Aorta (tissue), 5 donors: ENCODE measurements at regions of chr19 and their contacts with region 1.

Region 1: GRCh38 chr19:15449620-15450527 is at the start of gene WIZ:
- DNase-seq: peak; percentile 92 to 95
- ATAC-seq: peak; percentile 36
- H3K4me3 ChIP-seq: peak within 1 kb of the TSS; percentile 51 to 66
- H3K27ac ChIP-seq: peak within 1 kb of the TSS in 1 of 2 donors; percentile 78
- H3K4me1 ChIP-seq: peaks cover 0 to 1% of the 10 kb centered on the region in 2 donors
- H3K27me3 ChIP-seq: no peaks in the 10 kb centered on the region
- total RNA-seq, gene WIZ: 38.0 to 41.4 TPM

Region 2: GRCh38 chr19:15213715-15214381 is 236.0 kb before region 1 on chr19:
- intact Hi-C with region 1: no loop called
- DNase-seq: peak; percentile 92 to 98
- ATAC-seq: peak; percentile 82
- H3K4me3 ChIP-seq: no peak overlapping the region
- H3K27ac ChIP-seq: peak overlapping the region in 1 of 2 donors; percentile 76
- H3K4me1 ChIP-seq: peaks cover 0 to 4% of the 10 kb centered on the region in 2 donors
- H3K27me3 ChIP-seq: no peaks in the 10 kb centered on the region

Region 3: DNA sequence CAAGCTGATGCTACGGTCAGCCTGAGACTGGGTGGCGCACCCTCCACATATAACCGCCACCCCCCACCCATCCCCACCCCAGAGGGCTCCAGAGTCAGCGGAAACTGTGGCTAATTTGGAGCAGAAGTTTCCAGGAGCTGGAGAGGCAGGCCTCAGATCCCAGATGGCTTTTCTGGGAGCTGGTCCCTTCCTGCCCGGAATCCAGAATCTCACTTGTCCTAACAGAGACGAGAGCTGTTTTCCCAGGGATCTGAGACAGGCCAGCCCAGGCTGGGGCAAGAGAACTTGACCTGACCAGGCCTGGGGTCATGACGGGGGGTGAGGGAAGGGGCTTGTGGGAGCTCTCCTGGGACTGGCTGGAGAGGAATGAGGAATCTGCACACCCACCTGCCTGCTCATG is 224.1 kb before region 1 on chr19:
- intact Hi-C with region 1: no loop called
- DNase-seq: no peak
- ATAC-seq: no peak
- H3K4me3 ChIP-seq: no peak overlapping the region
- H3K27ac ChIP-seq: no peak overlapping the region
- H3K4me1 ChIP-seq: no peaks in the 10 kb centered on the region
- H3K27me3 ChIP-seq: no peaks in the 10 kb centered on the region

Region 4: DNA sequence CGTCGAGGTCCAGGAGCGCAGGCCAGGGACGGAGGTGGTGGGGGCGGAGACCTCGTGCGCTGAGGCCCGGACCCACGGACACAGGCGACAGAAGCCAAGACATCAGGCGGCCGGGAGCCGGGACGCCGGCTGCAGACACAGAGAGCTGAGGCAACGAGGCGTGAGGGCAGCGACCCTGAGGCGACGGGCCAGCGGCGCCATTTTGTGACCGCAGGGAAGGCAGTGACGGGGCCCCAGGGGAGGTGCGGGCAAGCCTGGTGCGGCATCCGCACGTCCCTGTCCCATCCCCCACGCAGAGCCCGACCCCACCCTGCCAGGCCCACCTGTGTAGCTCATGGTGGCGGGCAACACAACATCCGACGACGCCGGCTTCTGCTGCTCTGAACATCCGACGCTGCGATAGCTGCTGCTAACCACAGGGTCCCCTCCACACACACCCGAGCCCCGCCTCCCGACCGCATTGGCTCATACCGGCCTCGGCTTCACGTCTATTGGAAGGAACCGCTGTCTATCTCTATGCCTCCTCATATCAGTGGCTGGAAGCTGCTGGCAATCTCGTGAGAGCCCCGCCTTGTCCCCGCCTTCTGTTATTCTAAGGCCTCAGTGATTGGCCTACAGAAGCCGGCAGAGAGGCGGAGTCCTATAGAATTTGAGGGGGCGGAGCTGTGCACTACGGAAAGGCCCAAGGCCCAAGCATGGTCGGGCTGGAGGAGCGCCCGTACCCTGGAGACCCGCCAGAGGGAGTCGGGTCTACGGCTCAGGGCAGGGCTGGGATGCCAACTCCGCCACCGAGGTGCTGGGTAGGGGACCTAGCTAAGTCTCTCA is 31.1 kb before region 1 on chr19 and contains the start of gene AKAP8L:
- intact Hi-C with region 1: loop called in 1 of 2 experiments (anchors 2 kb)
- DNase-seq: peak; percentile 99
- ATAC-seq: peak; percentile 97
- H3K4me3 ChIP-seq: peak within 1 kb of the TSS; percentile 77 to 86
- H3K27ac ChIP-seq: peak within 1 kb of the TSS; percentile 62 to 93
- H3K4me1 ChIP-seq: no peaks in the 10 kb centered on the region
- H3K27me3 ChIP-seq: no peaks in the 10 kb centered on the region
- total RNA-seq, gene AKAP8L: 70.8 to 106 TPM

Region 5: GRCh38 chr19:15629003-15629880 is 179.4 kb after region 1 on chr19:
- intact Hi-C with region 1: no loop called
- DNase-seq: peak; percentile 83 to 94
- ATAC-seq: peak; percentile 88
- H3K4me3 ChIP-seq: no peak overlapping the region
- H3K27ac ChIP-seq: no peak overlapping the region
- H3K4me1 ChIP-seq: no peaks in the 10 kb centered on the region
- H3K27me3 ChIP-seq: no peaks in the 10 kb centered on the region